ENCODE measurements at regions of chr5 and their contacts with region 1.

Region 1: DNA sequence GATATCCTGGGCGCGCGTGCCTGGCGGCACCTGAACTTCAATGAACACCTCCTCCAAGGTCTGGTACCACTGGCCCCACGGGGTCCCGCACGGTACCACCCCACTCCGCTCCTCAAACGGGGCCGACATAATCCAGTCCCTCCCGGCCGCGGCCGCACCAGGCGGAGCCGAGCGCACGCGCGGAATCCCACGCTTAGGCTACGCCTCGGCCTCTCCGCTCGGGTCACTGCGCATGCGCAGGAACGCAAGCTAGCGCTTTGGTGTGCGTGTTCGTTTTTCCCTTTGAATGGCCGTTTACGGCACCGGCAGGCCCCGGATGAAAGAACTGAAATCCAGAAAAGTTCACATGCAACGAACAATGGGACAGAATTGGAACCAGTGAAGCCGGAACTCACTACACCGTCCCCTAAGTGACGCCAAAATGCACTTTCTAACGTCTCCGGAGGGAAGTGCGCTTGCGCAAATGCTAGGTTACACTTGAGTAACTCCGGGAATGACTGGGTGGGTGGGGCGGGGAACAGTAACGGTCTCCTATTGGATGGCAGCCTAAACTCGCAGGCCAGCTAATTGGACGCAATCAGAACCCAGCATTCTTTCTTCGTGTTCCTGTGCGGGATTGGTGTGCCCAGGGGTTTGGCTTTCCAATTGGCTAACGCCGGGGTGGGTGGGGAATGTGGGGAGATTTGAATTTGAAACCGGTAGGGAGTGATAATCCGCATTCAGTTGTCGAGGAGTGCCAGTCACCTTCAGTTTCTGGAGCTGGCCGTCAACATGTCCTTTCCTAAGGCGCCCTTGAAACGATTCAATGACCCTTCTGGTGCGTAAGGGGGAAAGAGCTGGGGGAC is at the starts of genes HMMR and NUDCD2:
- DNase-seq: peak; percentile 84

Region 2: DNA sequence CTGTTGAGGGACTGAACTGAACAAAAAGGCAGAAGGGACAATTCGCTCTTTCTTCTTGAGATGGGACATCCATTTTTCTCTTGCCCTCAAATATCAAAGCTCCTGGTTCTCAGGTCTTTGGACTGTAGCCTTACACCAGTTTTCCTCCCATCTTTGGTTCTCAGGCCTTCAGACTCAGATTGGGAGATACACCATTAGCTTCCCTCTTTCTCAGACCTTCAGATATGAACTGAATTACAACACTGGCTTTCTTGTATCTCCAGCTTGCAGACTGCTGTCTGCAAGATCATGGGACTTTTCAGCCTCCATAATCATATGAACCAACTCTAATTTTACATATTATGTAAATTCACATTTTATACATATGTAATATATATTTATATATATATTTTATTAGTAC is 35.3 kb before region 1 on chr5:
- CTCF ChIA-PET with region 1: no interaction called
- POLR2A ChIA-PET with region 1: no interaction called
- DNase-seq: no peak

Region 3: DNA sequence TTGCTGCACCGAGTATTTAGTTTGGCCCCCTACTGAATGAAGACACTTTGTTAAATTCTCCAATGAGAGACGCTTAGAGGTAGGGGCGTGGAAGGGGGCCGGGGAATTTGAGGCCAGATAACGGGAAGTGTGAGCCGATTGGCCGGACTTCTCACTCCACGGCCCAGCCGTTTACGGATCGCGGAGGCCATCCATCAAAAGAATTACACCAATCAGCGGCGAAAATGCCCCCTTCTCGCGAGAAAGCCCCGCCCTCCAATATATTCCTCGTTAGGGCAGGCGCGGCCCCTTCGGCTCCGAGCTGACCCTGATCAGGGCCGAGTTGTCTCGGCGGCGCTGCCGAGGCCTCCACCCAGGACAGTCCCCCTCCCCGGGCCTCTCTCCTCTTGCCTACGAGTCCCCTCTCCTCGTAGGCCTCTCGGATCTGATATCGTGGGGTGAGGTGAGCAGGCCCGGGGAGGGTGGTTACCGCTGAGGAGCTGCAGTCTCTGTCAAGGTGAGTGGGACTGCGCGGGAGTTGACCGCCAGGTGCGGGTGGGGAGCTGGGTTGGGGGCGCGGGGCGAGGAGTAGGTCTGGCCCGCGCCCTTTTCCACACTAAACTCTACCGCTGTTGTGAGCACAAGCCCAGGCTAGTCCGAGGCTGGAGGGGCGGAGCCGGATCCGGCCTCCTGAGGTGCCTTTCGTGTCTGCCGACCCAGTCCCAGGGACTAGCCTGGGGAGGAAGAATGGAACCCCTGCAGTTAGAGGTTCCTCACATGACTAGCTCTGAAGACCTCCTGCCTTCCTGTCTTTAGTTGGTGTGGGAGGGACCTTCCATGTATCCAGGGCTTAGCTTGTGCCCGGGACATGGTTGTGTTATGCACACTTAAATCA is 22.6 kb before region 1 on chr5 and contains the start of gene CCNG1:
- CTCF ChIA-PET with region 1: interaction called, 3 read pairs
- POLR2A ChIA-PET with region 1: interaction called, 129 read pairs
- DNase-seq: peak; percentile 90

Region 4: DNA sequence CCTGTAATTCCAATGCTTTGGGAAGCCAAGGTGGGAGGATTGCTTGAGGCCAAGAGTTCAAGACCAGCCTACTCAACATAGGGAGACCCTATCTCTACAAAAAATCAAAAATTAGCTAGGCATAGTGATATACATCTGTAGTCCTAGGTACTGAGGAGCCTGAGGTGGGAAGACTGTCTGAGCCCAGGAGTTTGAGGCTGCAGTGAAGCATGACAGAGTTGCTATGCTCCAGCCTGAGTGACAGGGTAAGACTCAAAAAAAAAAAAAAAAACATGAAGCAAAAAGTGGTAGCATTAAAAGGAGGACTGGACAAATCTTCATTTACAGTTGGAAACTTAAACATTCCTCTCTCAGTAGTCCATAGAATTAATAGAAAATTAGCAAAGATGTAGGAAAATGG is 13.0 kb before region 1 on chr5:
- CTCF ChIA-PET with region 1: interaction called, 3 read pairs
- POLR2A ChIA-PET with region 1: interaction called, 129 read pairs
- DNase-seq: no peak

Region 5: DNA sequence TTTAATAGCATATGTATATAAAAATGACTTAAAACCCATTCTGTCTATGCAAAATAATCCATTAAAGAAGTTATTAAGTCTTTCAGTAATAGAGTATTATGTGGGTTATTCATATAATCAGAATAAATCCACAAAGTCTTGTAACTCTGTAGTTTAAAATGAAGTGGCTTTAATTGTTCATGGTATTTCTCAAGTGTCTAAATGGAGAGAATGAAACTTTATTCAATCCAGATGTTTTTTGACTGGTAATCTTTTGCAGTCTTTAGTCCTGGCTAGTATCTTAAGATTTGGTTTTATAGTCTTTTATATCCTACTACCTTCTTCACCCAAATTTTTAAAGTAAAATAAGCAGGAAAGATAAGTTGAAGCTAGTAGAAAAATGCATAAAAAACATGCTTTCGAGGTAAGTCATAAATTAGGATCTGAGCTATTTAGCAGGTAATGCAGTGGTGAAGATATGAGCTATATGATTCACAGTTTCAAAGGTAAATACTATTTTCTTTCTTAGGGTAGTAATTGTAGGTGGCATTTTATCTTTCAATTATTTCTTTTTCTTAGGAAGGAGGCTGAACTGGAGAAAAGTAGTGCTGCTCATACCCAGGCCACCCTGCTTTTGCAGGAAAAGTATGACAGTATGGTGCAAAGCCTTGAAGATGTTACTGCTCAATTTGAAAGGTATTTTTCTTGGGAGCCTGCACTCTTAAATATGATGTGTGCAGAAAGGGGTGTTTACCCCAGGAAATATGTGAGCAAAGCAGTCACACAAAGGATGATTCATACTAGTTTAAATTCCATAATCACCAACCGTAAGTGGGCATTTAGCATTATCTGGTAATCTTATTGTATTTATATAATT is 18.2 kb after region 1 on chr5:
- CTCF ChIA-PET with region 1: no interaction called
- POLR2A ChIA-PET with region 1: interaction called, 11 read pairs
- DNase-seq: no peak

Region 6: DNA sequence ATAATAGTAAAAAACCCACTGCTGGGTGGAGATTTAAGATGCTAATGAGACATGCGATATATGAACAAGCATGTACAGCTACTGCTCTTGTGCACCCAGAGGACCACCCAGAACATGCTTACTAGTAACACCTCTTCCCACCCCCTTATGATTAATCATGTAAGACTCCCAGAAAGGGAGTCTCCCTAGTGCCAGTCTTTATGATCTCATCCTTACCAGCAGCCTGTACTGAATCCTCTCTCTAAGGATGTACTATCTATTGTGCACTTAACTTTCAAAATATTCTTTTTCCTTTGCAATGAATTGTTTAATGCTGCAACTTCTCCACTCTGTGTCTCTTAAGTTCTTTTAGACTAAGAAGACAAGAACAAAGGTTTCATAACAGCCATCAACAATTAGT is 36.1 kb after region 1 on chr5:
- CTCF ChIA-PET with region 1: no interaction called
- POLR2A ChIA-PET with region 1: interaction called, 77 read pairs
- DNase-seq: no peak

Region 7: DNA sequence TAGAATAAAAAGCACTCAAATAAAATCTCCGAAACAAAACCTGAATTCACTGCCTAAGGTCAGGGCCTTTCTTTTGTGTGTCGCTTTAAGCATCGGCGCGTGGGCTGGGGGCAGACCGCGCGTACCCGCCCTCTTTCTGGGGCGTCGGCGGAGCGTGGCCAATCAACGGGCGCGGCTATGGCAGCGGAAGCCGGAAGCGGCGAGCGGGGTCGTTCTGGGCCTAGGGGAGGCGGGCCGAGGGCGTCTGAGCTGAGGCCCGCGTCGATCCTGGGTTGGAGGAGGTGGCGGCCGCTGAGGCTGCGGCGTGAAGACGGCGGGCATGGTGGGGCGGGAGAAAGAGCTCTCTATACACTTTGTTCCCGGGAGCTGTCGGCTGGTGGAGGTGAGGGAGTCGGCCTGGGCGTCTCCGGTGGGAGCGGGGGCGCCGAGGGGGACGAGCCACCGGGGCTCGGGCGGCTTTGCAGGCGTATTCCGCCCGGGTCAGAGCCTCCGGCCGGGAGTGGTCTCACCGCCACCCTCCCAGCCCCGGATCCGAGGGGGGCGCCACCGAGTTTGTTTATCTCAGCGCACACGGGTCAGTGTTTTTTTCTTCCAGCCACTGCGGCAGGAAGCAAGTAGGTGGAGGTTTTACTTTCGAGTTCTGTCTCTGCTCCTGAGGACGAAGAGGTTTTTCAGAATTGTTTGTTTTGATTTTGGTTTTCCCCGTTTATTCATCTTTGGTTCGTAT is 45.4 kb after region 1 on chr5 and contains the start of gene MAT2B:
- CTCF ChIA-PET with region 1: interaction called, 4 read pairs
- POLR2A ChIA-PET with region 1: interaction called, 77 read pairs
- DNase-seq: peak; percentile 86

Region 8: DNA sequence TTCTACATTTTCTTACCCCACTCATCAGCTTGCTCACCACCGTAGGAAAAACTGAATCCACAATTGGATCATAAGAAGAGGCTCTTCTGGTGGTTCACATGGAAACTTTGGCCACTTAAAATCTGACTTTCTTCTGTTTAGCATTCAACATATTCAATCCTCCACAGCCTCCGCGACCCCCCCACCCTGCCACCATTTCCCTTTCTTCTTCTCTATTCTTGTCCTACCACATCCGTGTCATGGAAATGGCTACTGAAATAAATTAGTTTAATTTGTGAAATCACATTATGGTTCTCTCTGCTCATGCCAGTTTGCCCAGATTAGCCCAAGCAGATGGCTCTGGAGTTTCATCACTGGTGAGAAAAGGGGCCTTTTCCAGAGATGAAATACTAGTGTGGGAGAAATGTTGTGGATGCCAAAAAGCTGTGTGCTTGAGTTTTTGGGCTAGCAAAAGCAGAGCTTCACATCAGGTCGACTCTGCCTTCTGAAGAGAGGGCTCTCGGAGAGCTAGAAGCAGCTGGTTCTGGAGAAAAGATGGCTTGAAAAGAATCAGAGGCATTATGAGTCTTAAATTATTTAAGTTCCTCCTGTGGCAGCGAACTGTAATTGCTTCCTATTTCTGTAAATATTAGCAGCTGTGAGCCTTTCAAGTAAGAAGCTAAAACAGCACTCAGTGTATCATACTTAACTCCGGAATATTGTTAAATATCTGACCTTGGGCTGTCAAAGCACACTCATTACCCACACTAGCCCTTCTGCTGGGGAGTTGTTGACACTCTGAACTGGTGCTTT is 152.4 kb after region 1 on chr5:
- CTCF ChIA-PET with region 1: no interaction called
- POLR2A ChIA-PET with region 1: no interaction called
- DNase-seq: no peak

Region 9: DNA sequence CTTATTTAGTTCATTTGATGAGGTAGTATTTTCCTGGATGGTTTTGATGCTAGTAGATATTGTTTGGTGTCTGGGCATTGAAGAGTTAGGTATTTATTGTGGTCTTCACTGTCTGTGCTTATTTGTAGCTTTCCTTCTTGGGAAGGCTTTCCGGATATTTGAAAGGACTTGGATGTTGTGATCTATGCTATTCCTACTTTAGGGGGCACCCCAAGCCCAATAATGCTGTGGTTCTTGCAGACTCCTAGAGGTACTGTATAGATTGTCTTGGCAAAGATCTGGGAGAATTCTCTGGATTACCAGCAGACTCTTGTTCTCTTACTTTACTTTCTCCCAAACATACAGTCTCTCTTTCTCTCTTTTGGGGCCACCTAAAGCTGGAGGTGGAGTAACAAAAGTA is 361.0 kb after region 1 on chr5:
- CTCF ChIA-PET with region 1: no interaction called
- POLR2A ChIA-PET with region 1: no interaction called
- DNase-seq: no peak

Measured in HEK293T (cell line).